ENCODE measurements at regions of chr12 and their contacts with region 1.

Region 1: GRCh38 chr12:85836197-85837090 is at the start of gene RASSF9:
- DNase-seq: peak; percentile 61
- H3K4me3 Mint-ChIP-seq: peak within 1 kb of the TSS; percentile 90
- H3K27ac Mint-ChIP-seq: peak within 1 kb of the TSS; percentile 93
- H3K4me1 Mint-ChIP-seq: peaks cover 16% of the 10 kb centered on the region
- H3K27me3 Mint-ChIP-seq: no peaks in the 10 kb centered on the region
- CTCF ChIP-seq: no peak
- total RNA-seq, gene RASSF9: 3.0 and 3.3 TPM in 2 replicates

Region 2: GRCh38 chr12:85823436-85824180 is 12.8 kb before region 1 on chr12:
- CTCF ChIA-PET with region 1: interaction called, 13 read pairs
- intact Hi-C with region 1: loop called (anchors 2 kb)
- DNase-seq: peak; percentile 24
- H3K4me3 Mint-ChIP-seq: peak overlapping the region; percentile 32
- H3K27ac Mint-ChIP-seq: peak overlapping the region; percentile 71
- H3K4me1 Mint-ChIP-seq: peaks cover 63% of the 10 kb centered on the region
- H3K27me3 Mint-ChIP-seq: no peaks in the 10 kb centered on the region
- CTCF ChIP-seq: no peak